A673 (cell line): ENCODE measurements at regions of chr16 and their contacts with region 1.

Region 1: GRCh38 chr16:51636920-51637769 is 486.1 kb upstream of the SALL1 start:
- DNase-seq: peak; percentile 88
- H3K4me3 ChIP-seq: peak overlapping the region; percentile 20
- H3K27ac ChIP-seq: peak overlapping the region; percentile 85
- H3K4me1 ChIP-seq: peaks cover 35% of the 10 kb centered on the region
- H3K27me3 ChIP-seq: no peaks in the 10 kb centered on the region
- CTCF ChIP-seq: peak; percentile 41

Region 2: GRCh38 chr16:51151961-51152663 is 485.0 kb before region 1 on chr16:
- CTCF ChIA-PET with region 1: no interaction called
- POLR2A ChIA-PET with region 1: no interaction called
- intact Hi-C with region 1: loop called (anchors 10 kb)
- DNase-seq: peak; percentile 88
- H3K4me3 ChIP-seq: peak overlapping the region; percentile 70
- H3K27ac ChIP-seq: peak overlapping the region; percentile 68
- H3K4me1 ChIP-seq: peaks cover 19% of the 10 kb centered on the region
- H3K27me3 ChIP-seq: peaks cover 41% of the 10 kb centered on the region
- CTCF ChIP-seq: no peak

Region 3: GRCh38 chr16:51569203-51569931 is 67.8 kb before region 1 on chr16:
- CTCF ChIA-PET with region 1: no interaction called
- POLR2A ChIA-PET with region 1: no interaction called
- intact Hi-C with region 1: loop called (anchors 5 kb)
- DNase-seq: peak; percentile 97
- H3K4me3 ChIP-seq: no peak overlapping the region
- H3K27ac ChIP-seq: peak overlapping the region; percentile 46
- H3K4me1 ChIP-seq: peaks cover 32% of the 10 kb centered on the region
- H3K27me3 ChIP-seq: no peaks in the 10 kb centered on the region
- CTCF ChIP-seq: no peak

Region 4: DNA sequence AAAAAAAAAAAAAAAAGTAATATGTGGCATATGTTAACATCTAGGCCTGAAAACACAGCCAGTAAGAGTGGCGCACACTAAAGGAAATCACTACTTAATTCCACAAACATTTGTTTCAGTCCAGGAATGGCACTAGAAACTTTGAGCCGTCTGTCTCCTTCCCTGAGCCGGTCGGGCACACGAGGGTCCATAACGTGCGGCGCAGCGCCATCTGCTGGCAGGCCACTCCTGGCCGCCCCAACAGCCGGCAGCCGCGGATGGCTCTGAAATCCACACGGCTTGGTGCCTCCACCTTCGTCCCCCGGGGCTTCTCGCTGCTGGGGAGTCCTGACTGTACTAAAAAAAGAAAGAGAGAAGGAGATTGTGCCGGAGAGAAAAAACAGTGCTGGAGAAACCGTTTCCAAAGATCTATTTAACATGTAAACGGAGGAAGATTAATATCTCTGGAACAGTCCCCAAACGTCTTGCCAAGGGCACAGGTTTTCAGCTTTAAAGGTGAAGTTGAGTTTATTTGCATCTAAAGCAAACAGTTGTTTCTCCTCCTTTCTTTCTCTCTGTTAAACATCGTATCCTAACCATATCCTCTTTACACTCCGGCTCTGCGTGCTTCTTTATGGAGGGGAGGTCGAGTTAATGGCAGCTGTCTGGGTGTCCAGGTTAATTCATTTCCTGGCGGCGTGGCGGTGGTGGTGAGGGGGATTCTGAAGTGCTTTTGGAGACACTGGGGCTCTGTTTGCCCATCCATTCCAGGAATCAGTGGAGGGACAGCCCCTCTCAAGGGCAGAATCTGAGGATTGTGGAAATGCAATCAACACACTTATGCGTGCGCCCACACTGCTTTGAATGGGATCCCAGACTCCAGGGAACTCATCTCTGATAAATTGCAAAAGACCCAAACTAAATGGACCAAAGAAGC is 125.2 kb after region 1 on chr16:
- CTCF ChIA-PET with region 1: interaction called, 3 read pairs
- POLR2A ChIA-PET with region 1: no interaction called
- intact Hi-C with region 1: loop called (anchors 5 kb)
- DNase-seq: peak; percentile 92
- H3K4me3 ChIP-seq: peak overlapping the region; percentile 13
- H3K27ac ChIP-seq: peak overlapping the region; percentile 34
- H3K4me1 ChIP-seq: peaks cover 55% of the 10 kb centered on the region
- H3K27me3 ChIP-seq: no peaks in the 10 kb centered on the region
- CTCF ChIP-seq: peak; percentile 98

Region 5: DNA sequence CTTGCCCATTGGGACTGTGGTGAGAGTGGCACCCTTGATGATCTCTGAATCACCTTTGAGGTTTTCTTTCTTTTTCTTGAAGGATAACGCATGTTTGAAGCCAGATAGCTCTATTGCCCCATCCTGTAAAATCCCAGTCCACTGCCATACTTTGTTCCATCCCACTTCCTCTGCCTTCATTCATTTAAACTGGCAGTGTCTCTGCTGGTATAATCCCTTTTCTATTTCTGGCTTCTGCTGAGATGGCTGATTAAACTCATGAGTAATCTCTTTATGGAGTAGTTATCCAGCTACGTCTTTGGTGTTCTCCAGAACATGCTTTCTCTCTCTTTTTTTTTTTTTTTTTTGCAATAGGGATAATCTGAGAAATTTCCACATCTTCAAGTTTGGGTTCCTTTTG is 170.4 kb after region 1 on chr16:
- CTCF ChIA-PET with region 1: no interaction called
- POLR2A ChIA-PET with region 1: no interaction called
- intact Hi-C with region 1: no loop called
- DNase-seq: peak; percentile 57
- H3K4me3 ChIP-seq: no peak overlapping the region
- H3K27ac ChIP-seq: no peak overlapping the region
- H3K4me1 ChIP-seq: no peaks in the 10 kb centered on the region
- H3K27me3 ChIP-seq: no peaks in the 10 kb centered on the region
- CTCF ChIP-seq: no peak

Region 6: GRCh38 chr16:51818342-51818944 is 181.3 kb after region 1 on chr16:
- CTCF ChIA-PET with region 1: no interaction called
- POLR2A ChIA-PET with region 1: no interaction called
- intact Hi-C with region 1: no loop called
- DNase-seq: peak; percentile 78
- H3K4me3 ChIP-seq: no peak overlapping the region
- H3K27ac ChIP-seq: no peak overlapping the region
- H3K4me1 ChIP-seq: peaks cover 9% of the 10 kb centered on the region
- H3K27me3 ChIP-seq: no peaks in the 10 kb centered on the region
- CTCF ChIP-seq: peak; percentile 88

Region 7: DNA sequence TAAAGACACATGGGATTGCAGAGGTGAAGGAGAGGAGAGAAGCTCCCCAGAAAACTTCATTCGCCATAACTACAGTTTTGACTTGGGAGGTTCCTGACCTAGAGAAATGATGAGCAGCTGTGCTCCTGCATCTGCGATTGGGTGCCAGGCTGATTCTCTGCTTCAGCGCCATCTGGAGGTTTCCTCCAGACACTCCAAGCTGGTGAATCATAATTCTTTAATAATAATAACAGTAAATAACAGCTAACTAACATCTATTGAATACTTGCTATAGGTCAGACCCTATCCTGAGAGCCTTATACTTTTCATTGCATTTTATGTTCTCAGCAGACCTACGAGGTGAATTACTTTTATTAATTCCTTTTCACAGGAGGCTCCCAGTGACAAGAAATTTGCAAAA is 334.0 kb after region 1 on chr16:
- CTCF ChIA-PET with region 1: no interaction called
- POLR2A ChIA-PET with region 1: no interaction called
- intact Hi-C with region 1: loop called (anchors 5 kb)
- DNase-seq: peak; percentile 74
- H3K4me3 ChIP-seq: no peak overlapping the region
- H3K27ac ChIP-seq: no peak overlapping the region
- H3K4me1 ChIP-seq: peaks cover 49% of the 10 kb centered on the region
- H3K27me3 ChIP-seq: no peaks in the 10 kb centered on the region
- CTCF ChIP-seq: peak; percentile 82